Heart left ventricle (tissue), 16 donors: ENCODE measurements at regions of chr5 and their contacts with region 1.

Region 1: GRCh38 chr5:107542428-107542827 is 128.3 kb downstream of the EFNA5 start:
- DNase-seq: peak; percentile 36 to 88 (median 65)
- ATAC-seq: peak; percentile 38 to 76 (median 62)
- H3K4me3 ChIP-seq: peak overlapping the region in 3 of 12 donors; percentile 7 to 26 (median 18)
- H3K27ac ChIP-seq: peak overlapping the region; percentile 9 to 84 (median 71)
- H3K4me1 ChIP-seq: peaks cover 0 to 48% (median 6%) of the 10 kb centered on the region in 12 donors
- H3K27me3 ChIP-seq: no peaks in the 10 kb centered on the region
- CTCF ChIP-seq: no peak
- POLR2A ChIP-seq: no peak

Region 2: DNA sequence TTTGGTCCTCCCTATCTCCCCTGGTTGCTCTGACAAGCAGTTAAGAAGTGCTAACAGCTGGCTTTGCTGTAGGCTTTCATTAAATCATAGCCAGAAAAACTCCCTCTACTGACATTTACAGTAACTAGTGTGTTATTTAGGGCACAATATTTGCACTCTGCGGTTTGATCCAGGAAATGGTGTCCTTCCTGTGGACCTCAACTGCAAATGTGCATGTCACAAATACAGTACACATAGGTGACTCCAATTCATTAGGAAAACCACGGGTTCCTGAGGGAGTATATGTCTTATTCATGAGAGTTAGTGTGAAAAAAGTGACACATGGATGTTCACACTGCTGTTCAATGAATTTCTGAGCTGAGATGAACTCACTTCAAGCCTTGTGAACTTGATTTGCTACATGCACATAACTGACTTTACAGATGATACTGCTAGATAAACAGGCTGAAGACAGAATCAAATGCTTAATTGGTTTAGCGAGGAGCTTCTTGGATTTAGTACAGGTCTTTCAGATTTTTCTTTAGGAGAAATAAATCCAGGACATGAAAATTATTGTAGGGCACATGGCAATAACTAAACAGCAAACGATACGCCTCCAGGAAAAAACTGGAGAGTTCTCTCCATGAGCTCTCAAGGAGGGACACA is 153.2 kb before region 1 on chr5:
- intact Hi-C with region 1: loop called in 1 of 10 experiments (anchors 10 kb)
- DNase-seq: no peak
- ATAC-seq: peak; percentile 70 to 81 (median 76)
- H3K4me3 ChIP-seq: no peak overlapping the region
- H3K27ac ChIP-seq: peak overlapping the region; percentile 1 to 74 (median 60)
- H3K4me1 ChIP-seq: peaks cover 0 to 34% (median 17%) of the 10 kb centered on the region in 12 donors
- H3K27me3 ChIP-seq: no peaks in the 10 kb centered on the region
- CTCF ChIP-seq: peak in 3 of 12 donors; percentile 13 to 35 (median 25)
- POLR2A ChIP-seq: no peak

Region 3: DNA sequence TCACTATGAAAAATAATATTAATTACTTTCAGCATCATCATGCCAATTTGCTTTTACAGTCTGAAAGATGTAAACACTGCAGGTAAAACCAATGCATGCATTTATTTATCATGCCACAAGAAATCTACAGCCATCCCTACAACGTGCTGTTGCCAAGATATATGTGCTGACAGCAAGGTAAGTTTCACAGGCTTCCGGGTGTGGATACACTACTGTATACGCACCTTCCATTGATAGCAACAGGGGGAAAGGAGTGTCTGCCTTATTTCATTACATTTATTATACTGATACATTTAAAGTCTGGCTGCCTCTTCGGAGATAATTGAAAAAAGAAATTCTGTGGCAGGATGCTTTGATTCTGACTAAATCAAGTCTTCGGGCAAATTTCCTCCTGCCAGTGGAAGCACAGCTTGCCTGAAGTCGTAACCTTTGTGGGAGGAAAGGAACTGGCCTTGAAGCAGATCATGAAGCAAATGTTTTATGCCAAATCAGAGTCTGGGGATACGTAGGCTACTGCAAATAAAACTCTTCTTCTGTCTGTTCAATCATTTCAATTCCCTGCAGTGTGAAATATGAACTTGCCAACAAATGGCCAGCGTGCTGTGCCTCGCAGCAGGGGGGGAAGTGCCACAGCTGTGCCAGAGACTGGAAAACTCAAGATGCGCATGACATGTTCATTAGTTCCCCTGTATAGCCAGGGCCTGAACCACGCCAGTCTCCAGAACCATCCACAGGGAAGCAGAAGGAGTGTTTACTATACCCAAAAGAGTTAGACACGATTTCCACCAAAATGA is 139.8 kb before region 1 on chr5:
- intact Hi-C with region 1: loop called in 1 of 10 experiments (anchors 10 kb)
- DNase-seq: peak in 2 of 5 donors; percentile 14 to 49
- ATAC-seq: peak; percentile 70 to 84 (median 82)
- H3K4me3 ChIP-seq: no peak overlapping the region
- H3K27ac ChIP-seq: peak overlapping the region in 7 of 12 donors; percentile 12 to 52 (median 28)
- H3K4me1 ChIP-seq: peaks cover 0 to 22% (median 6%) of the 10 kb centered on the region in 12 donors
- H3K27me3 ChIP-seq: no peaks in the 10 kb centered on the region
- CTCF ChIP-seq: no peak
- POLR2A ChIP-seq: no peak